ENCODE measurements at regions of chr2 and their contacts with region 1.

Region 1: GRCh38 chr2:44479122-44479887 is 117.6 kb downstream of the CAMKMT start:
- DNase-seq: peak; percentile 87
- ATAC-seq: peak; percentile 100
- H3K4me3 ChIP-seq: no peak overlapping the region
- H3K27ac ChIP-seq: no peak overlapping the region
- H3K4me1 ChIP-seq: no peaks in the 10 kb centered on the region
- H3K27me3 ChIP-seq: no peaks in the 10 kb centered on the region
- CTCF ChIP-seq: peak; percentile 100; the same call in 1 of the 2 replicates
- POLR2A ChIP-seq: no peak
- RAD21 ChIP-seq: peak; percentile 90

Region 2: GRCh38 chr2:44038277-44038676 is 441.0 kb before region 1 on chr2:
- CTCF ChIA-PET with region 1: no interaction called
- POLR2A ChIA-PET with region 1: no interaction called
- dilution Hi-C with region 1: no loop called
- in situ Hi-C with region 1: loop called (anchors 10 kb)
- intact Hi-C with region 1: no loop called
- DNase-seq: no peak
- ATAC-seq: no peak
- H3K4me3 ChIP-seq: no peak overlapping the region
- H3K27ac ChIP-seq: no peak overlapping the region
- H3K4me1 ChIP-seq: no peaks in the 10 kb centered on the region
- H3K27me3 ChIP-seq: peaks cover 24% of the 10 kb centered on the region
- CTCF ChIP-seq: no peak
- POLR2A ChIP-seq: no peak
- RAD21 ChIP-seq: no peak

Region 3: GRCh38 chr2:44087036-44087713 is 392.1 kb before region 1 on chr2:
- CTCF ChIA-PET with region 1: no interaction called
- POLR2A ChIA-PET with region 1: no interaction called
- dilution Hi-C with region 1: no loop called
- in situ Hi-C with region 1: no loop called
- intact Hi-C with region 1: loop called (anchors 2 kb)
- DNase-seq: peak; percentile 61
- ATAC-seq: peak; percentile 99
- H3K4me3 ChIP-seq: peak overlapping the region; percentile 44
- H3K27ac ChIP-seq: no peak overlapping the region
- H3K4me1 ChIP-seq: peaks cover 2% of the 10 kb centered on the region; the same call in 1 of the 2 replicates
- H3K27me3 ChIP-seq: peaks cover 4% of the 10 kb centered on the region
- CTCF ChIP-seq: peak; percentile 96
- POLR2A ChIP-seq: no peak
- RAD21 ChIP-seq: peak; percentile 93

Region 4: DNA sequence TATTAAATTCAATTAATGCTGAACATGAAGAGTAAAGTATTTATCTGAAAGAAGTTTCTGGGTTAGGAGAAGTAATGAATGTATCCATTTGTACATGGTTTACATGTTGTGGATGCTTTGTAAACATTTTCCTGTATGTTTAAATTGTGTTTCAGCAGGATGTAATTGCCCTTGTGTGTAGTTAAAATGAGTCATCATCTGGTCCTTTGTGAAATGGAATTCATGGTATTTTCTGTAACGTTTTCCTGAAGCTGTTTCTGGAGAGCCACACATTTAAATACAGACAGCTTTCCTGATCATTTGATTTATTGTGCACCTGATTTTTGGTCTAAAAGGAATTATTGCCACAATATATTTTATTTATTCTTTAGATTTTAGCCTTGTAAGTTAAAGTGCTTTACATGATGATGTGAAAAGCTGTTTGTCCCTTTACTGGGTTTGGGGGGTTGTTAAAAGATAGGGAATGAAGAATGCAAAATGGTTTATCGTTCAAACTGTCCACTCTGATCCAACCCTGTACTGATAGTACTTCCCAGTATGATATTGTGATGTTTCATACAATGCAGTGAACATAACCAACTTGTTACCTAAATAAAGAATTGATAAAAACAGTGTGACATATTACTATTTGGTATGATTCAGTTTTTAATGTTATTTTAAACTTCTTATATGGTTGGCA is 245.7 kb before region 1 on chr2:
- CTCF ChIA-PET with region 1: no interaction called
- POLR2A ChIA-PET with region 1: no interaction called
- dilution Hi-C with region 1: no loop called
- in situ Hi-C with region 1: no loop called
- intact Hi-C with region 1: no loop called
- DNase-seq: peak; percentile 85
- ATAC-seq: peak; percentile 94
- H3K4me3 ChIP-seq: no peak overlapping the region
- H3K27ac ChIP-seq: peak overlapping the region; percentile 50; the same call in 1 of the 2 replicates
- H3K4me1 ChIP-seq: peaks cover 2% of the 10 kb centered on the region; the same call in 1 of the 2 replicates
- H3K27me3 ChIP-seq: no peaks in the 10 kb centered on the region
- CTCF ChIP-seq: no peak
- POLR2A ChIP-seq: no peak
- RAD21 ChIP-seq: 0 out of 2 replicates have a peak, but pooled peaks have one; percentile 4

Region 5: GRCh38 chr2:44715671-44716081 is 236.4 kb after region 1 on chr2:
- CTCF ChIA-PET with region 1: interaction called, 16 read pairs
- POLR2A ChIA-PET with region 1: no interaction called
- dilution Hi-C with region 1: no loop called
- in situ Hi-C with region 1: no loop called
- intact Hi-C with region 1: loop called (anchors 1 kb)
- DNase-seq: peak; percentile 27
- ATAC-seq: peak; percentile 67
- H3K4me3 ChIP-seq: no peak overlapping the region
- H3K27ac ChIP-seq: no peak overlapping the region
- H3K4me1 ChIP-seq: no peaks in the 10 kb centered on the region
- H3K27me3 ChIP-seq: no peaks in the 10 kb centered on the region
- CTCF ChIP-seq: peak; percentile 49
- POLR2A ChIP-seq: no peak
- RAD21 ChIP-seq: peak; percentile 51

Region 6: DNA sequence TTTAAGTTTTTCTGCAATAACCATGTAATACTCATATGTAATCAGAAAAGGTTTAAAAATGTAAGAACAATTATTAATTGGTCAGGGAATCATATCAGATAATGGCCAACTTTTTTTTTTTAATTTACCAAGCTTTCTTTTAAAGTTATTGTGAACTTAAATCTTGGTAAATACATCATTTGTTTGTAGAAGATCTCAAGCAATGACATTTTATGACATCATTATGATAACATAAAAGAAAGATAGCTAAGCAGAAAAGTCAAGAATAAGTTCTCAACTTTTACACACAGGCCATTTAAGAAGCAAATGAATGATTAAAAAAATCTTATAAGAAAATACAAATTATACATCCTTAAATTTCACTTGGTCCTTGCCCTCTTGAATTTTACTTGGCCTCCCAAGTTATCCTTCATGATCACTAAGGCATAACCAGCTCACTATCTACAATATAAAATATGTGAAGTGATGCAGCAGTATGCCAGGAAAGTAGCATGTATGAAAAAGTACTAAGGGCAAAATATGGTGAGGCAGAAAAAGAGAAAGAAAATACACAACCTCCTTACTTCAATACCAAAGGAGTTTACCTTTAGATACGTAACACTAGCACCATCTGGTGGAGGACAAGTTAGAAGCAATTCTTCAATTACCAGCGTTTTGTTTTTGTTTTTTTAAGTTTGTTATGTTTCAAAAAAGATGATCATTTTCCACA is 1015.1 kb after region 1 on chr2:
- CTCF ChIA-PET with region 1: interaction called, 3 read pairs
- POLR2A ChIA-PET with region 1: no interaction called
- dilution Hi-C with region 1: no loop called
- in situ Hi-C with region 1: no loop called
- intact Hi-C with region 1: loop called (anchors 10 kb)
- DNase-seq: peak; percentile 79
- ATAC-seq: peak; percentile 62; the same call in 1 of the 2 replicates
- H3K4me3 ChIP-seq: no peak overlapping the region
- H3K27ac ChIP-seq: no peak overlapping the region
- H3K4me1 ChIP-seq: no peaks in the 10 kb centered on the region; the same call in 1 of the 2 replicates
- H3K27me3 ChIP-seq: no peaks in the 10 kb centered on the region
- CTCF ChIP-seq: peak; percentile 93
- POLR2A ChIP-seq: no peak
- RAD21 ChIP-seq: peak; percentile 89

Measured in IMR-90 (cell line).